ENCODE measurements at regions of chr6 and their contacts with region 1.

Region 1: GRCh38 chr6:24902782-24903181 is 33.0 kb downstream of the RIPOR2 start:
- DNase-seq: no peak
- ATAC-seq: no peak
- H3K4me3 ChIP-seq: no peak overlapping the region
- H3K4me3 Mint-ChIP-seq: peak overlapping the region; percentile 44
- H3K27ac ChIP-seq: peak overlapping the region; percentile 12 to 63
- H3K27ac Mint-ChIP-seq: peak overlapping the region; percentile 94
- H3K4me1 ChIP-seq: peaks cover 97% of the 10 kb centered on the region
- H3K4me1 Mint-ChIP-seq: peaks cover 94% of the 10 kb centered on the region
- H3K27me3 ChIP-seq: no peaks in the 10 kb centered on the region
- H3K27me3 Mint-ChIP-seq: no peaks in the 10 kb centered on the region
- CTCF ChIP-seq: no peak

Region 2: DNA sequence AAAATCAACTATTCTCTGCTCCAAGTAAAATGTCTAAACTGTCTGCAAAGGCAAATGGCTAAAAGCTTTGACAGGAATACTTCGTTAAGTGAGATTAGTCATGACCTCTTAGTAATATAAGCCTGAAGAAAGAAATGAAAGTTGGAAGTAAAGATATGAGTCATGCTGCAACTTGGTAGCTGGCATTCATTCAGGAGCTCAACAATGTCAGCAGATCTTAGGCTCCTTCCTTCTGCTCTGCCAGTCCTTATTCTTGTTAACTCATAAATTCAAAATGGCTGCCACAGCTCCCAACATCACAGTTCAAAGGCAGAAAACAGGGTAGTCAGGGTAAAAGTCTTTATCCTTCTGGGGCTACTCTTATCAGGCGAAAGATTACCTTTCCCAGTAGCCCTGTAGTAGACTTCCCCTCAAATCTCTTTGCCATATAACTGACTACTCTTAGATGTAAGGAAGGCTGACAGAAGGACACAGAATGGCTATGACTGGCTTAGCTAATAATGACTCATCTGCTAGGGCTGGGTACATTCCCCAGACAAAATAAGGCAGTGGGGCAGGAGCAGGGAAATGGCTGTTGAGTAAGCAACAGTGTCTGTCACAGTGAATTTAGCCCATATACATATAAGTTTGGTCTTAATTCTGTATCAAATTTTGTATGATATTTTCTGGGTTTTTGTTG is 159.4 kb before region 1 on chr6:
- CTCF ChIA-PET with region 1: no interaction called
- POLR2A ChIA-PET with region 1: no interaction called
- intact Hi-C with region 1: no loop called
- DNase-seq: peak in 1 of 9 experiments; percentile 22
- ATAC-seq: no peak
- H3K4me3 ChIP-seq: no peak overlapping the region
- H3K4me3 Mint-ChIP-seq: no peak overlapping the region
- H3K27ac ChIP-seq: no peak overlapping the region
- H3K27ac Mint-ChIP-seq: no peak overlapping the region
- H3K4me1 ChIP-seq: no peaks in the 10 kb centered on the region
- H3K4me1 Mint-ChIP-seq: no peaks in the 10 kb centered on the region
- H3K27me3 ChIP-seq: no peaks in the 10 kb centered on the region
- H3K27me3 Mint-ChIP-seq: peaks cover 2% of the 10 kb centered on the region
- CTCF ChIP-seq: no peak

Region 3: DNA sequence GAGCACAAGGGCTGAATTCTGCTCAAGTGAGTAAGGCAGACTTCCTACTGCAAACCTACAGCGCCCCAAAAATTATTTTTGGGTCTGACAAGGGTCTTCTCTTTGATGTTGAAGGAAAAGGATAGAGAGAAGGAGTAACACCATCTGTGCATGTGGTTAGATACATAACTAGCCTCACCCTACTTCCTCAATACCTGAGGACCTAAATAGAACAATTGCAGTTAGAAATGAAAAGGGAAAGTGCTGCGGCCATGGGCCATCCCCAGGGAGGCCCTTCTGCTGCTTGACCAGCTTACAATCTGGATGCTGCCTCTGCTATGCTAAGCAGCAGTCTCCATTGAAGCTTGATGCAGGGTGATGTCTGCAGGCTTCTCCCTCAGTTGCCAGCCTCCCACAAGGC is 40.8 kb before region 1 on chr6:
- CTCF ChIA-PET with region 1: interaction called, 41 read pairs
- POLR2A ChIA-PET with region 1: interaction called, 8 read pairs
- intact Hi-C with region 1: loop called (anchors 2 kb)
- DNase-seq: no peak
- ATAC-seq: no peak
- H3K4me3 ChIP-seq: peak overlapping the region in 1 of 2 experiments; percentile 2
- H3K4me3 Mint-ChIP-seq: no peak overlapping the region
- H3K27ac ChIP-seq: peak overlapping the region; percentile 11 to 75
- H3K27ac Mint-ChIP-seq: peak overlapping the region; percentile 96
- H3K4me1 ChIP-seq: peaks cover 96% of the 10 kb centered on the region
- H3K4me1 Mint-ChIP-seq: peaks cover 95% of the 10 kb centered on the region
- H3K27me3 ChIP-seq: no peaks in the 10 kb centered on the region
- H3K27me3 Mint-ChIP-seq: no peaks in the 10 kb centered on the region
- CTCF ChIP-seq: no peak

Region 4: GRCh38 chr6:24888715-24889370 is 13.9 kb before region 1 on chr6:
- CTCF ChIA-PET with region 1: interaction called, 5 read pairs
- POLR2A ChIA-PET with region 1: interaction called, 24 read pairs
- intact Hi-C with region 1: loop called (anchors 1 to 2 kb)
- DNase-seq: no peak
- ATAC-seq: peak; percentile 62
- H3K4me3 ChIP-seq: no peak overlapping the region
- H3K4me3 Mint-ChIP-seq: peak overlapping the region; percentile 30
- H3K27ac ChIP-seq: peak overlapping the region in 1 of 2 experiments; percentile 48
- H3K27ac Mint-ChIP-seq: peak overlapping the region; percentile 79
- H3K4me1 ChIP-seq: peaks cover 84% of the 10 kb centered on the region
- H3K4me1 Mint-ChIP-seq: peaks cover 88% of the 10 kb centered on the region
- H3K27me3 ChIP-seq: no peaks in the 10 kb centered on the region
- H3K27me3 Mint-ChIP-seq: no peaks in the 10 kb centered on the region
- CTCF ChIP-seq: no peak

Measured in CD8-positive, alpha-beta T cell (primary cell).